Activated T-helper 1 cell treated with anti-CD3 and anti-CD28 coated beads, Interleukin-12 subunit alpha, Interleukin-12 subunit beta, Interleukin-2, Interleukin-4 antibody, amounts not matched to agents 30 ng/mL and 10 ng/mL and 1 ng/mL, durations not matched to agents 14 hours and 24 hours and 36 hours (primary cell): ENCODE measurements at regions of chr11 and their contacts with region 1.

Region 1: DNA sequence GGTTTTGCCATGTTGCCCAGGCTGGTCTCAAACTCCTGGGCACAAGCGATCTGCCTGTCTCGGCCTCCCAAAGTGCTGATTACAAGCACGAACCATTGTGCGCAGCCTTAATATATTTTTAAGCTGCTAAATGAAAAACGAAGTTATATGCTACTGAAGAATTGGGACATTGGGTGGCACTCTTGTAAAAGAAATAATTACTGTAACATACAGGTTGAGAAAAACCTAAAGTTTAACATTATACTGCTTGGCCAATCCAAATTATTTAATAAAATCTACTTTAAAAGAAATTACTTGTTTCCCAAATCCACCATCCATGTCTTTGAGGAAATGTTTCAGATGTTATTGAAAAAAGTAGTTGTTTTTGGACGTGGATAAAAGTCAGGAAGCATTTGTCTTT is 37.9 kb upstream of the ARHGAP32 start:
- DNase-seq: no peak
- H3K4me3 Mint-ChIP-seq: no peak overlapping the region
- H3K27ac Mint-ChIP-seq: no peak overlapping the region
- H3K4me1 Mint-ChIP-seq: no peaks in the 10 kb centered on the region
- H3K27me3 Mint-ChIP-seq: peaks cover 3% of the 10 kb centered on the region

Region 2: GRCh38 chr11:129331871-129332274 is 101.9 kb after region 1 on chr11:
- intact Hi-C with region 1: loop called (anchors 2 kb)
- DNase-seq: peak; percentile 34
- H3K4me3 Mint-ChIP-seq: no peak overlapping the region
- H3K27ac Mint-ChIP-seq: no peak overlapping the region
- H3K4me1 Mint-ChIP-seq: no peaks in the 10 kb centered on the region
- H3K27me3 Mint-ChIP-seq: no peaks in the 10 kb centered on the region

Region 3: GRCh38 chr11:129346916-129347315 is 116.9 kb after region 1 on chr11:
- intact Hi-C with region 1: no loop called
- DNase-seq: no peak
- H3K4me3 Mint-ChIP-seq: no peak overlapping the region
- H3K27ac Mint-ChIP-seq: no peak overlapping the region
- H3K4me1 Mint-ChIP-seq: no peaks in the 10 kb centered on the region
- H3K27me3 Mint-ChIP-seq: peaks cover 6% of the 10 kb centered on the region